Psoas muscle (tissue), 8 donors: ENCODE measurements at regions of chr1 and their contacts with region 1.

Region 1: GRCh38 chr1:41322835-41323627 is 38.2 kb upstream of the FOXO6 start:
- DNase-seq: peak; percentile 60 to 83
- ATAC-seq: peak; percentile 86 to 94 (median 90)
- H3K4me3 ChIP-seq: no peak overlapping the region
- H3K27ac ChIP-seq: no peak overlapping the region
- H3K4me1 ChIP-seq: peaks cover 24% of the 10 kb centered on the region
- H3K27me3 ChIP-seq: no peaks in the 10 kb centered on the region
- CTCF ChIP-seq: peak; percentile 63

Region 2: DNA sequence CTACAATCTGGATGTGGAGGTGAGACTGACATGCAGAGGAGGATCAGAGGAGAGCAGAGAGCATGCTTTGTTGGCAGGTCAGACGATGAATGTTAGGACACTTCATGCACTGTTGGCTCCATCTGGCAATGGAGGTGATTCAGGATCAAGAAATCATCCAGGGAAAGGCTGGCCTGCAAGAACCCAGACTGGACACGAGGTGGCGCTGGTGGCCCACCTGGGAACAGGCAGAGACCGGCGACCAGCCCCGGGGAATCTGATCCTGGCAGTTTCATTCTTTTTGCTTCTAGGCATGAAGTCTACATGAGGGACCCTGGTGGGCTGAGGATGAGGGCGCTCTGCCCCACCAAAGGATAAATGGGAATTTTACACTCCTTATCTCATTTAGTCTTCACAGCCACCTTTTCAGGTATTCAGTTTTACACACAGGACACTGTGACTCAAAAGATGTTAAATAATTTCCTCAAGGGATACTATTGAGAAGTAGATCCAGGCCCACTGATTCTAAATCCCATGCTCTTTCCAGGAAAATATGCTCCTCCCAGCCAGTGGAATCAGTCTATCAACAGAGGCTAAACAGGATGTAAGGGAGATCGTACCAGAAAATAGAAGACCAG is 54.8 kb before region 1 on chr1:
- intact Hi-C with region 1: loop called in 1 of 2 experiments (anchors 5 kb)
- DNase-seq: peak; percentile 75 to 85
- ATAC-seq: peak; percentile 90 to 96 (median 94)
- H3K4me3 ChIP-seq: no peak overlapping the region
- H3K27ac ChIP-seq: no peak overlapping the region
- H3K4me1 ChIP-seq: peaks cover 3% of the 10 kb centered on the region
- H3K27me3 ChIP-seq: no peaks in the 10 kb centered on the region
- CTCF ChIP-seq: peak; percentile 99